ENCODE measurements at regions of chr6 and their contacts with region 1.

Region 1: GRCh38 chr6:147285087-147285855 is 81.1 kb downstream of the STXBP5 start:
- DNase-seq: no peak
- H3K4me3 Mint-ChIP-seq: no peak overlapping the region
- H3K27ac Mint-ChIP-seq: peak overlapping the region; percentile 60
- H3K4me1 Mint-ChIP-seq: peaks cover 39% of the 10 kb centered on the region
- H3K27me3 Mint-ChIP-seq: no peaks in the 10 kb centered on the region

Region 2: DNA sequence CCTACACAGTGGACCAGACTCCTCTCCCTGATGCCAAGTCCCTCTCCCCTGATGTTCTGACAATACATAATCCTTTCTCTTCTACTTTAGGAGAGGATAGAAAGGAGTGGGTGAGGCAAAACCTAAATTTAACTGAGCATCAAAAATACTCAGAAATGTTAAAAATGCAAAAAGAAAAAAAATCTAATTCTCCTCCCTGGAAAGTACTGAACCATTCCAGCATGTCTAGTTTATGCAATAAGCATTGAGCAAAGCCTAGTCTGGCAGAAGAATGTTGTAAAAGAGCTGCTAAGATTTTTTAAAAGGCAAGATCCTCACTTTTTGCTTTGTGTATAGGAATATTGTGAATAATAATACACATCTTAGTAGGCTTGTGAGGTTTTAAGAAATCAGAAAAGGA is 197.6 kb before region 1 on chr6:
- intact Hi-C with region 1: no loop called
- DNase-seq: no peak
- H3K4me3 Mint-ChIP-seq: no peak overlapping the region
- H3K27ac Mint-ChIP-seq: no peak overlapping the region
- H3K4me1 Mint-ChIP-seq: no peaks in the 10 kb centered on the region
- H3K27me3 Mint-ChIP-seq: peaks cover 6% of the 10 kb centered on the region

Region 3: DNA sequence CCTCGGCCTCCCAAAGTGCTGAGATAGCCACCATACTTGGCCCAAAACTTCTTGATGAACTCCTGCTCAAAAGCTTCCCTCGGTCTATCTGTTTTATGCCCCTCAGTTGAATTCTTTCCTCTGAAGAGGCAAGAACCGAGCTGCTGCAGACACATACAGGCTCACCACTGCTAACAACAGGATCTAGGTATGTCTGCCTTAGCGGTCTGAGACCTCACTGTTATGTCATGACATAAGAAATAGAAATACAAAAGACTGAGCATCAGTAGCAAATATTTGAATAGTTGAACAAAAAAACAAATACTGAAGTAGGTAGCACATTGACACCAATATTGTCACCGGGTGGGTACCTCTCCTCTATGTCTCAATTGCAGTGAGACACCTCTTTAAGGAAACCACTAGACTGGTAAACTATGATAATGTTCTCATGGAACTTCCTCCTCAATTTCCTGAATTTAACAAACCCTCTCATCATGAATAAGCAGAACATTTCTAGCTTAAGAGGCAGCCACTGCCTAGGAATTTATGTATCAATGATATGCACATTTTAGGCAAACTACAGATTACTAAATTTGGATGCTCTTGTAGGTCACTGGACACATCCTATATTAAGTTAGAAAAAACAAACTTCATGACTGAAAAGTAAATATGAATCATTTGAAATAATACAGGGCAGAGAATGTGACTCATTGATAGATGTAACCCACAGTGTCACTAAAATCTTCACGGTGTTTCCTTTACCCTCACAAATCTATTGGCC is 90.4 kb before region 1 on chr6:
- intact Hi-C with region 1: loop called (anchors 1 kb)
- DNase-seq: no peak
- H3K4me3 Mint-ChIP-seq: no peak overlapping the region
- H3K27ac Mint-ChIP-seq: peak overlapping the region; percentile 77
- H3K4me1 Mint-ChIP-seq: peaks cover 20% of the 10 kb centered on the region
- H3K27me3 Mint-ChIP-seq: no peaks in the 10 kb centered on the region

Region 4: GRCh38 chr6:147202516-147203312 is 82.6 kb before region 1 on chr6:
- intact Hi-C with region 1: loop called (anchors 1 kb)
- DNase-seq: peak; percentile 95
- H3K4me3 Mint-ChIP-seq: peak overlapping the region; percentile 98
- H3K27ac Mint-ChIP-seq: peak overlapping the region; percentile 93
- H3K4me1 Mint-ChIP-seq: peaks cover 32% of the 10 kb centered on the region
- H3K27me3 Mint-ChIP-seq: no peaks in the 10 kb centered on the region

Region 5: DNA sequence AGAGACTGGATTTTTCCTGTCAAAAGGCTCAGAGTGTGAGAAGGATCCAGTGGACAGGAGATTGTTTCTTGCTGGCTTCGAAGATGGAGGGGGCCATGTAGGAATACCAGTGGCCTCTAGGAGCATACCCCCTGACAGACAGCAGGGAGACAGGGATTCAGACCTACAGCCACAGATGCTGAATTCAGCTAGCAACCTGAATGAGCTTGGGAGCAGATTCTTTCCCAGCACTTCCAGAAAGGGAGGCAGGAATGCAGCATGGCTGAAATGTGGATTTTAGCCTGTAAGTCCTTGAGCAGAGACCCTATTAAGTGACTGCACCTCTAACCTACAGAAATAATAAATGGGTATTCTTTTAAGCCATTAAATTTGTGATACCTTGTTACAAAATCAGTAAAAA is 36.4 kb before region 1 on chr6:
- intact Hi-C with region 1: no loop called
- DNase-seq: no peak
- H3K4me3 Mint-ChIP-seq: no peak overlapping the region
- H3K27ac Mint-ChIP-seq: no peak overlapping the region
- H3K4me1 Mint-ChIP-seq: peaks cover 8% of the 10 kb centered on the region
- H3K27me3 Mint-ChIP-seq: no peaks in the 10 kb centered on the region

Region 6: DNA sequence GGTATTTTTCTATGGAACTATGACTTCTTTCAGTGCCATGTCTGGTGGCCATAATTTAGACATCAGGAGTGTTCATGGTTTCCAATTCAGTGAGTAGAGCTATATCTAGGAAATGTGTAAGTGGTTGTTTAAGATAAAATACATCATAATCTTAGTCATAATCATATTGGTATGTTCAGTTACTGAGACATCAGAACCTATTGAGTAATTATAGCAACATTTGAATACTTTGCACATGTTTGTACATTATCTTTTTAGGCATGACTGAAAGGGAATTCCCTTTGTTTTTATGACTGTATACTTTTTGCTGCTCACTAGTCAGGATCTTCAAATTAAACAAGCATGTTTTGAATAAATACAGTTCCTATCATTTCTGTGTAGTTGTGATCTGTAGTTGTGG is 17.0 kb before region 1 on chr6:
- intact Hi-C with region 1: loop called (anchors 1 kb)
- DNase-seq: no peak
- H3K4me3 Mint-ChIP-seq: no peak overlapping the region
- H3K27ac Mint-ChIP-seq: peak overlapping the region; percentile 70
- H3K4me1 Mint-ChIP-seq: peaks cover 9% of the 10 kb centered on the region
- H3K27me3 Mint-ChIP-seq: no peaks in the 10 kb centered on the region

Region 7: DNA sequence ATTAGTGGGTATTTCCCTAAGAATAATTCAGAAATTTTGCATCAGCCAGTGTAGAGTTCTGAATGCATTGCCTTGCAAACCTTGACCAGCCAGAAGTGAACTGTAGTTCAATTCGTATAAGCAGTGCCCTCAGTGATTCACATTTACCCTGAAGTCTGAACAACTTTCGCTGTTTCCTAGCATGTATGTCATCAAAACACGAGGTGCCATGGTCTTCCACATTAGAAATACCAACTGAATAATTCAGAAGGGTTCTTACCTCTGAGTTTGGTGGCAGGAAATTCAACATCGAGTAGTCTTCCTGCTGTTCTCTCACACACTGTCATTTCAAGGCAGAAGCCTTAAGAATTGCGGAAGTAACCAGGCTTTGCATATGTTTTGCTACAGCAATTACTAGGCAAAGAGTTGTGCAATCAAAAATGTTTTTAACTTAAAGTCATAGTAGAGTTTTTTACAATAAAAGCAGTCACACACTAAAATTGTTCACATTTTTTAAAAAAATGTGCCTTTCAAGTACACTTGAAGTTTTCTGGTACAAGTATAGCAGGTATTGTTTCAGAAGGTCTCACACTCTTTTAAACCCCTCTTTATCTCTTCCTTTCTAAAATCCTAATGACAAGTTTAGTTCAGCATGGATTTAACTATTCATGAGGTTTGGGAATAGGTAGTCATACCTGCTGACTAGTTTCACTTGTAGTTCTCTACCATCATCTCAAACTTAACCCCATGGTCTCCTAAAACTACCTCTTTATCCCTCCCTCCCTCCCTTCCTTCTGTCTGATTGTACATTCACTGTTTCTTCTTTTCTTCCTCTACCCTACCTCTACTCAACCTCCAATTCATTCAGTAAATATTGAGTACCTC is 37.3 kb after region 1 on chr6:
- intact Hi-C with region 1: loop called (anchors 2 kb)
- DNase-seq: peak; percentile 78
- H3K4me3 Mint-ChIP-seq: peak overlapping the region; percentile 68
- H3K27ac Mint-ChIP-seq: peak overlapping the region; percentile 79
- H3K4me1 Mint-ChIP-seq: peaks cover 13% of the 10 kb centered on the region
- H3K27me3 Mint-ChIP-seq: no peaks in the 10 kb centered on the region

Region 8: GRCh38 chr6:147382945-147383554 is 97.8 kb after region 1 on chr6:
- intact Hi-C with region 1: loop called (anchors 10 kb)
- DNase-seq: no peak
- H3K4me3 Mint-ChIP-seq: no peak overlapping the region
- H3K27ac Mint-ChIP-seq: no peak overlapping the region
- H3K4me1 Mint-ChIP-seq: peaks cover 6% of the 10 kb centered on the region
- H3K27me3 Mint-ChIP-seq: no peaks in the 10 kb centered on the region

Measured in activated CD4-positive, alpha-beta T cell treated with anti-CD3 and anti-CD28 coated beads, Interleukin-2, amount 10 ng/mL, durations not matched to agents 24 days and 14 days (primary cell).